MCF 10A (cell line): ENCODE measurements at regions of chr18 and their contacts with region 1.

Region 1: GRCh38 chr18:22169007-22169864 is at the start of gene GATA6:
- DNase-seq: peak; percentile 89
- H3K4me3 Mint-ChIP-seq: peak within 1 kb of the TSS; percentile 97
- H3K27ac Mint-ChIP-seq: peak within 1 kb of the TSS; percentile 78
- H3K4me1 Mint-ChIP-seq: peaks cover 6% of the 10 kb centered on the region
- H3K27me3 Mint-ChIP-seq: no peaks in the 10 kb centered on the region
- CTCF ChIP-seq: peak; percentile 25
- total RNA-seq, gene GATA6: 6.7 and 14.0 TPM in 2 replicates

Region 2: GRCh38 chr18:21955757-21956652 is 213.2 kb before region 1 on chr18:
- CTCF ChIA-PET with region 1: interaction called, 3 read pairs
- POLR2A ChIA-PET with region 1: no interaction called
- intact Hi-C with region 1: loop called (anchors 5 kb)
- DNase-seq: peak; percentile 78
- H3K4me3 Mint-ChIP-seq: no peak overlapping the region
- H3K27ac Mint-ChIP-seq: no peak overlapping the region
- H3K4me1 Mint-ChIP-seq: peaks cover 6% of the 10 kb centered on the region
- H3K27me3 Mint-ChIP-seq: peaks cover 16% of the 10 kb centered on the region
- CTCF ChIP-seq: peak; percentile 83

Region 3: DNA sequence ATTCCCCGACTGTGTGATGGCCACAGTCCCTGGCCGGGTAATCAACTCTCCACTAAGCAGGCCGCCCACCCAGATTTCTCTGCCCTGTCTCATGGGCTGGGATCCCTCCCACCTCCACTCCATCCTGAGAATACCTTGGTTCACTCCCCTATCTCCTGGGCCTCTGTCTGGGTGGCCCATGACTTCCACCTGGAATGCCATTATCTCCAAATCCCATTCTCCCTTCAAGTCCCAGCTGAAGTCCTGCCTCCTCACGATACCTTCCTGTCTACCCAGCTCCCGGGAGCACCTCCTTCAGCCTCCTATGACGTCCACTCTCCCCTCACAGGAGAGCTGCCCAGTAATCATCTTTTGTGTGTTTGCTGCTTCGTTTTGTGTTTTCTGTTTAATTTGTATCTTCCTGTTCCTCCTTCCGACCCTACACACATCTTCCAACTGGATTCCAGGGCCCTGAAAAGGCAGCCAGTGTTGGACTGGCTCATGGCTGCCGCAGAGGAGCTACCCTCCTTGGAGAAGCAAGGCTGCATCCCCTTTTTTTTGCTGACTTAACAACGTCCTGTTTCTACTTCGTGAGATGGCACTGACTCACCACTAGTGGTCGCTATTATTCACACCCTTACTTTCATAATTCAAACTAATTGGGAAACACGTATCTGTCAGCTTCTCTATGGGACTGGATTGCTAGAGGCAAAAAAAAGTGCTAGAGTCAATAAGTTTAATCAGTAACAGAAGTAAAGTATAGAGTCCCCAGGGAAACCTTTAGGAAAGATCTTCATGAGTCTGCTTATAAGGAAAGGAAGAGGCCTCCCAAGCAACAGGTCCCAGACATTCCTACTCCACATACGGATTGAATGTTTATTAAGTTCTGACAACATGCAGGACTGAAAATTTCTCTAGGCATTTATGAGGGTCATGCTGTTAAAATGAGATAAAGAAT is 171.8 kb before region 1 on chr18:
- CTCF ChIA-PET with region 1: no interaction called
- POLR2A ChIA-PET with region 1: no interaction called
- intact Hi-C with region 1: loop called (anchors 10 kb)
- DNase-seq: peak; percentile 65
- H3K4me3 Mint-ChIP-seq: no peak overlapping the region
- H3K27ac Mint-ChIP-seq: peak overlapping the region; percentile 6
- H3K4me1 Mint-ChIP-seq: peaks cover 5% of the 10 kb centered on the region
- H3K27me3 Mint-ChIP-seq: no peaks in the 10 kb centered on the region
- CTCF ChIP-seq: peak; percentile 81

Region 4: GRCh38 chr18:22233106-22233640 is 63.9 kb after region 1 on chr18:
- CTCF ChIA-PET with region 1: no interaction called
- POLR2A ChIA-PET with region 1: no interaction called
- intact Hi-C with region 1: no loop called
- DNase-seq: no peak
- H3K4me3 Mint-ChIP-seq: no peak overlapping the region
- H3K27ac Mint-ChIP-seq: no peak overlapping the region
- H3K4me1 Mint-ChIP-seq: no peaks in the 10 kb centered on the region
- H3K27me3 Mint-ChIP-seq: peaks cover 11% of the 10 kb centered on the region
- CTCF ChIP-seq: no peak

Region 5: DNA sequence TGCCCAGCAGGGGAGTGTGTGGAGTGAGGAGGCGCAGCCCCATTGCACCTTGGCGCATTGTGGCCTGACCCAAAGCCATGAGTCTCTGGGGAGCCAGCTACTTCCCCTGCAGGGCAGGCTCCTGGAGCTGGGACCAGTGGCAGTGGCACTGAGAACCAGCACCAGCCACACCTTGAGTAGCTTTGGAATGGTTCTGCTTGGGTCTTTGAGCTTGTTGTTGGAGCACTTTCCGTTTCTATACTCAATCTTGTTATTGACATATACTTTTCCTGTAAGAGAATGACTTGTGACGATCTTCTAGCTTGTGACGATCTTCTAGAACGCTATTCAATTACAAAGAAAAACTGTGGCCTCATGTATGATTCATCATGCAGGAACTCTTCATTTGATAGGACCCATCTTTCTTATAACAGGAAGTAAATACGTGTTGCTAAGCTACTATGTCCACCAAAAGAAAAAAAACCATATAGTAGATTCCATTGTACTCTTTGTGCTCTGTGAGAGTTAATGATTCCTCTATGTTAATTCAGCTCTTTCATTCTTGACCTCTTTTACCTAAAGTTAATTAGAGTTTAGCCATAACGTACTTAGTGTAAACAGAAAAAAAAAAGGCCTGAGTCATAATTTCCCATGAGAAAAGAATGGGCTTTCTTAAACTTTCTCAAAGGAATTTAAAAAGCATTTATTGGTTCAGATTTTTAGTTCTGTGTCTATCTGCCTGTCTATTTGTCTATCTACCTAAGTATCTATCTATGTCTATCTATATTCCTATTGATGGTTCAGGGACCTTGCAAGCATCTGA is 113.3 kb after region 1 on chr18:
- CTCF ChIA-PET with region 1: interaction called, 3 read pairs
- POLR2A ChIA-PET with region 1: no interaction called
- intact Hi-C with region 1: loop called (anchors 1 kb)
- DNase-seq: peak; percentile 71
- H3K4me3 Mint-ChIP-seq: no peak overlapping the region
- H3K27ac Mint-ChIP-seq: peak overlapping the region; percentile 84
- H3K4me1 Mint-ChIP-seq: peaks cover 39% of the 10 kb centered on the region
- H3K27me3 Mint-ChIP-seq: no peaks in the 10 kb centered on the region
- CTCF ChIP-seq: no peak

Region 6: GRCh38 chr18:22363867-22364463 is 194.7 kb after region 1 on chr18:
- CTCF ChIA-PET with region 1: no interaction called
- POLR2A ChIA-PET with region 1: interaction called, 4 read pairs
- intact Hi-C with region 1: loop called (anchors 10 kb)
- DNase-seq: peak; percentile 30
- H3K4me3 Mint-ChIP-seq: no peak overlapping the region
- H3K27ac Mint-ChIP-seq: no peak overlapping the region
- H3K4me1 Mint-ChIP-seq: no peaks in the 10 kb centered on the region
- H3K27me3 Mint-ChIP-seq: no peaks in the 10 kb centered on the region
- CTCF ChIP-seq: peak; percentile 27

Region 7: GRCh38 chr18:22703883-22704585 is 534.8 kb after region 1 on chr18:
- CTCF ChIA-PET with region 1: no interaction called
- POLR2A ChIA-PET with region 1: no interaction called
- intact Hi-C with region 1: loop called (anchors 10 kb)
- DNase-seq: peak; percentile 76
- H3K4me3 Mint-ChIP-seq: no peak overlapping the region
- H3K27ac Mint-ChIP-seq: no peak overlapping the region
- H3K4me1 Mint-ChIP-seq: no peaks in the 10 kb centered on the region
- H3K27me3 Mint-ChIP-seq: no peaks in the 10 kb centered on the region
- CTCF ChIP-seq: peak; percentile 74

Region 8: DNA sequence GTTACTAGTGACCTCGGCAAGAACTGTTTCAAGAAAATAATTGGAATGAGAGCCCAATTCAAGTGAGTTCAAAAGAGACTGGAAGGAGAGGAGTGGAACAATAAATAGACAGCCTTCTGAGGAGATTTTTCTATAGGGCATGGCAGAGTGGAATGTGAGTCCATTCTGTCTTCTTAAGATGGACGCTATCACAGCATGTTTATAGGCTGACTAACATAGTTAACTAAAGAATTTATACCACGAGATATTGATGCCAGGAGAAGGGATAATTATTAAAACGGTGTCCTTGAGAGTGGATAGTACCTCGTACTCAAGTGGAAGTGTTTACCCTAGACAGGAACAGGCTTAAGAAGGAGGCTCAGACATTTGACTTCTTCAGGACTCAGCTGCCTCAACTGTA is 620.4 kb after region 1 on chr18:
- CTCF ChIA-PET with region 1: no interaction called
- POLR2A ChIA-PET with region 1: no interaction called
- intact Hi-C with region 1: loop called (anchors 10 kb)
- DNase-seq: no peak
- H3K4me3 Mint-ChIP-seq: no peak overlapping the region
- H3K27ac Mint-ChIP-seq: no peak overlapping the region
- H3K4me1 Mint-ChIP-seq: no peaks in the 10 kb centered on the region
- H3K27me3 Mint-ChIP-seq: peaks cover 11% of the 10 kb centered on the region
- CTCF ChIP-seq: no peak